ENCODE measurements at regions of chr4 and their contacts with region 1.

Region 1: GRCh38 chr4:112636688-112637551 is at the starts of genes LARP7 and ZGRF1:
- ATAC-seq: peak; percentile 93 to 97 (median 95)
- H3K4me3 ChIP-seq: peak within 1 kb of the TSS; percentile 69 to 96 (median 76)
- H3K27ac ChIP-seq: peak within 1 kb of the TSS; percentile 95 to 97
- H3K4me1 ChIP-seq: peaks cover 8 to 11% of the 10 kb centered on the region in 2 donors
- total RNA-seq, gene LARP7: 35.9 to 70.3 (median 50.7) TPM
- total RNA-seq, gene ZGRF1: 2.0 to 20.5 (median 7.6) TPM

Region 2: GRCh38 chr4:112765317-112765975 is 128.5 kb after region 1 on chr4:
- in situ Hi-C with region 1: loop called in 5 of 9 experiments (anchors 5 to 25 kb)
- ATAC-seq: peak in 7 of 8 experiments; percentile 25 to 84 (median 44)
- H3K4me3 ChIP-seq: no peak overlapping the region
- H3K27ac ChIP-seq: no peak overlapping the region
- H3K4me1 ChIP-seq: peaks cover 0 to 3% of the 10 kb centered on the region in 2 donors

Region 3: GRCh38 chr4:112938461-112939058 is 301.6 kb after region 1 on chr4:
- in situ Hi-C with region 1: loop called in 8 of 9 experiments (anchors 25 kb)
- ATAC-seq: peak in 4 of 8 experiments; percentile 27 to 45 (median 40)
- H3K4me3 ChIP-seq: no peak overlapping the region
- H3K27ac ChIP-seq: no peak overlapping the region
- H3K4me1 ChIP-seq: peaks cover 3 to 17% of the 10 kb centered on the region in 2 donors

Region 4: GRCh38 chr4:113094802-113095201 is 457.9 kb after region 1 on chr4:
- in situ Hi-C with region 1: loop called in 3 of 9 experiments (anchors 25 kb)
- ATAC-seq: peak in 1 of 8 experiments; percentile 27
- H3K4me3 ChIP-seq: no peak overlapping the region
- H3K27ac ChIP-seq: no peak overlapping the region
- H3K4me1 ChIP-seq: no peaks in the 10 kb centered on the region

Measured in motor neuron (in vitro differentiated cells).